ENCODE measurements at regions of chr6 and their contacts with region 1.

Region 1: DNA sequence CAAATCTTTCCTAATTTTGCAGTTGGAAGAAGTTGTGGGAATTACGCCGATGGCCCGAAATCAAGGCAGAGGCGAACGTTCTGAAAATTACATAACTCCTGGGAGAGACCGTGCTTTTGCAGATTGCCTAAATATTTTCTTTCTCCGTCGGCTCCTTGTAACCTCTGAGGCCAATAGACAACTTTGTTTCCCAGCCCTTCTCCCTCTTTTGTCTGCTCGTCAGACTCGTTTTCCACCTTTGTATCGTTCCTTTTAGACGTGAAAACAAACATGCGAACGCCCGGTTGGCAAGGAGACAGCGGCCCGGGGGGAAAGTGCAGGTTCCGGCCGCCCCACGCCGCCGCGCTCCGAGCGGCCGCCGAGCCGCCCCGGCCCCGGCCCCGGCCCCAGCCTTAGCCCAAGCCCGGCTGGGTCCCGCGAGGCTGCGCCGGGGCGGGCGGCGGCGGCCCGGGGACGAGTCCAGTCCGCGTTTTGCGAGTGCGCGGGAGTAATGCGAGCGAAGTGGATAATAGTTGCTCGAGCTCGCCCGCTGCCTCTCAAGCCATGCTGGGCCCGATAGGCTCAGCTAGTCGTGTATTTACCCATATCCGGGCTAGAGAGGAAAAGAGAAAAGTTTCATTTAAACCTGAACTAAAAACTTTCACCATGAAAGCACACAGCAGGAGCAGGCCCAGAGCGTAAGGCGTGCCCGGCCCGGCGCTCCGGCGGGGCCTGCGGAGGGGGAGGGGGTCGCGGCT is at the start of gene ARID1B:
- DNase-seq: peak; percentile 73
- H3K4me3 ChIP-seq: peak within 1 kb of the TSS; percentile 82 to 89
- H3K27ac ChIP-seq: peak within 1 kb of the TSS; percentile 98 to 100
- H3K4me1 ChIP-seq: no peaks in the 10 kb centered on the region
- H3K27me3 ChIP-seq: no peaks in the 10 kb centered on the region
- CTCF ChIP-seq: no peak
- POLR2A ChIP-seq: peak; percentile 40
- total RNA-seq, gene ARID1B: 65.1 to 99.4 TPM

Region 2: DNA sequence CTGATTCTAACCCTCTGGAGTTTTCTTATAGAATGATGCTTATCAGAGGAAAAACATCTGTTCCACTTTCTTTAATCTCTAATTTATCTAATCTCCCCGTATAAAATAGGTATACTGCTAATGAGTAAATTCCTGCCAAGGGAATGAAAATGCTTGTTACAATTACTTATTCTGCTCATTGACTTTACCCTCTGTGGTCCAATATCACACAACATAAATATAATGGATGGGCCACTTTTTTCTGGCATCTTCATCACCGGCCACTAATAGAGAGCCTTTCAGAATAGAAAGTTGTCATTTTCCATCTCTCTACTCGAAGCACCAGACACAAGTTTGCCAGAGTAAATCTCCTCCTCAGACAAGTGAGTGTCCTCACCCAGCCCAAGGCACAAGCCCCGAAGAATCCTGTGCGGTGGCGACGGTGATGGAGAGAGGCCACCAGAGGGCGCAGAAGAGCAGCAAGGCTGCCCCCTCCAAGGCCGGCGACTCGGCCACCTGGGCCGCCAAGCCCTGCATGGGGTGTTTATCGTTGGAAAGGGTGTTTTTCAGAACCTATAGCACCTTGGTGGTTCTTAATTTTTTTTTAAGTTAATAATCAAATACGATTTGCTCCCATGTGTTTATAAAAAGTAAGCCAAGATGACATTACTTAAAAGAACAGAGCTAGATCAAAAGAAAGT is 212.7 kb before region 1 on chr6:
- intact Hi-C with region 1: loop called (anchors 5 kb)
- DNase-seq: peak; percentile 78
- H3K4me3 ChIP-seq: no peak overlapping the region
- H3K27ac ChIP-seq: no peak overlapping the region
- H3K4me1 ChIP-seq: no peaks in the 10 kb centered on the region
- H3K27me3 ChIP-seq: no peaks in the 10 kb centered on the region
- CTCF ChIP-seq: peak; percentile 87 to 93 (median 90)
- POLR2A ChIP-seq: no peak

Region 3: DNA sequence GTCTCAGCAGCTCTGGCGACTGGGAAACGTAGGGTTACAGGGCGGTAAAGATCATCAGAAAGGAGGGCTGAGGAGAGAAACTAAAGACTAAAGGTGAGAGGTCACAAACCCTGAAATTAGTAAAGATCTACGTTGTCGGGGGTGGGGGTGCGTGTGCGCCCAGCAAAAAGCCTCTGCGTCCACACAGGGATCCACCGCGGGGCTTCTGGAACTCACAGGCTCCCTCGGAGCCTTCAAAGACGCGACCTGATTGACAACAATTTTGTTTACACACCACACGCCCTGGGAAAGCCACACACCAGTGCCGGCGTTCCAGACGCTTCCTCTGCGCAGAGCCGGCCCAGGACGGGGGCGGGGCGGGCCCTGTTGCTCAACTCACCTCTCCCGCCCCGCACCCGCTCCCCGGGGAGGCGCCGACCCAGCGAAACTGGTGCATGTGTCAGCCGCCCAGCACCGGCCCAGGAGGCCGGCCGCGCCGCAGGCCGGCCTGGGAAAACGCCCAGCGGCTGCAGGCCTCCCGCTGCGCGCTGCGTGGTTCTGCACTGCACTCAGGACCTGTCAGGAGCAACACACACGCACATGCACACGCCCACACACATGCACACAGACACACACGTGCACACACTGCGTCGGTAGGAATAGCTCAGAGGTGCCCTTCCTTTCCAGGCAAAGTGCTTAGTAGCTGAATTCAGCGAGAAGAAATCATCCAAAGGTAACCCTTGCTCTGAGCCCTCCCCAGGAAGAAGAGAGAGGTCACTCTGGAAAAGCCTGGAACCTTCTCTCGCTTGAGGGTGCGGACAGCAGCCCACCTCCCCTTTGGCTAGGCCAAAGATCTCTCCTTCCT is 57.1 kb before region 1 on chr6:
- intact Hi-C with region 1: loop called (anchors 2 kb)
- DNase-seq: peak; percentile 97
- H3K4me3 ChIP-seq: peak overlapping the region; percentile 6 to 12
- H3K27ac ChIP-seq: peak overlapping the region; percentile 90 to 95
- H3K4me1 ChIP-seq: peaks cover 15% of the 10 kb centered on the region
- H3K27me3 ChIP-seq: no peaks in the 10 kb centered on the region
- CTCF ChIP-seq: peak in 1 of 4 experiments; percentile 22
- POLR2A ChIP-seq: peak; percentile 60

Region 4: GRCh38 chr6:156953479-156954146 is 176.6 kb after region 1 on chr6:
- intact Hi-C with region 1: loop called (anchors 10 kb)
- DNase-seq: no peak
- H3K4me3 ChIP-seq: no peak overlapping the region
- H3K27ac ChIP-seq: no peak overlapping the region
- H3K4me1 ChIP-seq: peaks cover 21% of the 10 kb centered on the region
- H3K27me3 ChIP-seq: no peaks in the 10 kb centered on the region
- CTCF ChIP-seq: peak in 2 of 4 experiments; percentile 56 to 59
- POLR2A ChIP-seq: no peak

Region 5: DNA sequence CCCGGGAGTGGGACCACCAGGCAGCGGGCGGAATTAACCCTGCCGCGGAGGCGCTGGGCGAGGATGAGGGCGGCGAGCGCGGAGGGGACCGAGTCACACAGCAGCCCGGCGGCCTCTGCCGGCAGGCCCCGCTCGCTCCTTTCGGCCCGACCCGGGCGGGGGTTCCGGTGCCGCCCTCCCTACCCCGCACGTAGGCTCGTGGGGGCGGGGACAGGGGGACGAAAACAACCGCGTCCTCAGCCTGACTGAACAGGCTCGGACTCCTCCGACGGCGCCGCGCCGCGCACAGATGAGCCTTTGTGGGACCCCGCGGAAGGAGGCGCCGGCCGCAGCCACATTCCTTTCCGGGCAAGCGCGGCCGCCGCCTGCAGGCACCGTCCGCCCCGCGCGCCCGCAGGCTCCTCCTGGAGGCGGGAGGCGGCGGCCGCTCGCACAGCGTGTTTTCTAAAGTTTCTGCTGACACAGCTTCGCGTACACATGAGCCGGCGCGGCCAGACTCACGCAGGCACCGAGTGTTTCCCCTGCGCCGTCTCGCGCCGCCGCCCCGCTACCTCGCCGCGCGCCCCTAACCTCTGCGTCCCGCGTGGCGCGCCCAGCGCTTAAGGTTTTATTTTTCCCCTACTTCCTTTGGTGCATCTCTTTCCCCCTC is 244.5 kb after region 1 on chr6:
- intact Hi-C with region 1: loop called (anchors 2 kb)
- DNase-seq: peak; percentile 92
- H3K4me3 ChIP-seq: peak overlapping the region; percentile 80 to 84
- H3K27ac ChIP-seq: peak overlapping the region; percentile 99
- H3K4me1 ChIP-seq: peaks cover 4% of the 10 kb centered on the region
- H3K27me3 ChIP-seq: no peaks in the 10 kb centered on the region
- CTCF ChIP-seq: peak in 3 of 4 experiments; percentile 34 to 46 (median 44)
- POLR2A ChIP-seq: peak; percentile 98

Region 6: DNA sequence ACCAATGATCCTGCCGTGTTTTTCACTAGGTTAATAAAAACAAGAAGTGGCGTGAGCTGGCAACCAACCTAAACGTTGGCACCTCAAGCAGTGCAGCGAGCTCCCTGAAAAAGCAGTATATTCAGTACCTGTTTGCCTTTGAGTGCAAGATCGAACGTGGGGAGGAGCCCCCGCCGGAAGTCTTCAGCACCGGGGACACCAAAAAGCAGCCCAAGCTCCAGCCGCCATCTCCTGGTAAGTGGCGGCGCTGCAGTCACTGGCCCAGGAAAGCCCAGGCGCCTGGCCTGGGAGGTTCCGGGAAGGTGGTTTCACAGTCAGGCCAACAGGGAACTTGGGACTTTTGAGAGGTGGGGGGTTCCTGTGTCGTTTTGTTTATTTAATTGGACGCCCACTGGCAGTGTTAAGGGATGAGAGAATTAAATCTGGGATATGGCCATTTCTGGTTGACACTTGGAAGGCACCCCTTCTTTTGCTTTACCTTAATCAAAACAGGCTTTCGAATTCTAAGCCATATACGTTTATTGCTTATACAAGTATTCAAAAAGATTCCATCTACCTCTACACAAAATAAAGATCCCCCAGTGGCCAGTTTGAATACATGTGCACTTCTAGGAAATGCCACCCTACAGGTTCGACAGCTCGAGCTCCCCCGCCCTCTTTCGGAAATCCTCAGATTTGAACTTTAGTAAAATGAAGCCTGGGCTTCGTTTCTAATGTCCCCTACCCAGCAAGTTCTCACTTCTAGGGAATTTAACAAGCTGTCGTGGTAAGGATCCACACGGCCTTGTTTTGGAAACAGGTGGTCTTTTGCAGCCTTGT is 407.4 kb after region 1 on chr6:
- intact Hi-C with region 1: loop called (anchors 5 kb)
- DNase-seq: peak; percentile 82
- H3K4me3 ChIP-seq: no peak overlapping the region
- H3K27ac ChIP-seq: peak overlapping the region; percentile 69 to 70
- H3K4me1 ChIP-seq: no peaks in the 10 kb centered on the region
- H3K27me3 ChIP-seq: no peaks in the 10 kb centered on the region
- CTCF ChIP-seq: peak; percentile 81 to 96 (median 92)
- POLR2A ChIP-seq: no peak